ENCODE measurements at regions of chr6 and their contacts with region 1.

Region 1: GRCh38 chr6:81216651-81217050 is 535.8 kb downstream of the TENT5A start:
- DNase-seq: no peak
- H3K4me3 ChIP-seq: no peak overlapping the region
- H3K27me3 ChIP-seq: no peaks in the 10 kb centered on the region
- CTCF ChIP-seq: no peak

Region 2: GRCh38 chr6:81241126-81242041 is 24.7 kb after region 1 on chr6:
- CTCF ChIA-PET with region 1: interaction called, 3 read pairs
- POLR2A ChIA-PET with region 1: interaction called, 13 read pairs
- DNase-seq: peak; percentile 81
- H3K4me3 ChIP-seq: no peak overlapping the region
- H3K27me3 ChIP-seq: no peaks in the 10 kb centered on the region
- CTCF ChIP-seq: peak; percentile 48